ENCODE measurements at regions of chr17 and their contacts with region 1.

Region 1: DNA sequence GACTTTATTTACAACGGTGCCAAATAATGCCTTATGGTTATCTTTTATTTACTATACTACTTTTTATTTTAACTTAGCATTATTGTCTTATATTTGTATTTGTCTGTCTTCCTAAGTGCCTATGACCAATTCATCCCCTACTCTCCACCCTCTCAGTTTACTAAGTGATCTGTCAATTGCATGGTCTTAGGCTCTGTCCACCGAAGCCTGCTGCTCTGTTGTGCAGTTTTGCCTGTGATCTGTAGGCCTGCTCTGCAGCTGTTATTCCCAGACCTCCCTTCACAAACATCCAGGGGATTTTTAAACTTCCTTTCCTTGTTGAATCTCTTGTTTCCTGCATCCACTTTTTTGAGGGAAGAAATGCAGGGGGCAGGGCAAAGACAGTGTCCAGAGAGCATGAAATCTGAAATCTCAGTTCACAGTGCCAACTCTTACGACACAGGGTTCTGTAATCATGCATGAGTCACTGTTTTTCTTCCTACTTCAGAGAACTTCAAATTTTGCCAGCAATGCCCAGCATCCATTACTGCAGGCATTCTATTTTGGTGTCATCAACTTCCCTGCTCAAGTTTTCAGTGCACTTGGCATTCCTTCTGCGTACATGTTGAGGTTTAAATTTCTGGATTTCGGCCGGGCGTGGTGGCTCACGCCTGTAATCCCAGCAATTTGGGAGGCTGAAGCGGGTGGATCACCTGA is 11.4 kb downstream of the SLFN5 start:
- DNase-seq: no peak
- H3K4me3 ChIP-seq: no peak overlapping the region
- H3K4me3 Mint-ChIP-seq: peak overlapping the region in 6 of 8 donors; percentile 9 to 67 (median 34)
- H3K27ac ChIP-seq: no peak overlapping the region
- H3K27ac Mint-ChIP-seq: peak overlapping the region; percentile 43 to 91 (median 87)
- H3K4me1 ChIP-seq: peaks cover 93% of the 10 kb centered on the region
- H3K4me1 Mint-ChIP-seq: peaks cover 60 to 93% (median 76%) of the 10 kb centered on the region in 4 donors
- H3K27me3 ChIP-seq: no peaks in the 10 kb centered on the region
- H3K27me3 Mint-ChIP-seq: no peaks in the 10 kb centered on the region

Region 2: GRCh38 chr17:35183332-35183731 is 70.9 kb before region 1 on chr17:
- CTCF ChIA-PET with region 1: no interaction called
- POLR2A ChIA-PET with region 1: no interaction called
- intact Hi-C with region 1: no loop called
- DNase-seq: no peak
- H3K4me3 ChIP-seq: no peak overlapping the region
- H3K4me3 Mint-ChIP-seq: no peak overlapping the region
- H3K27ac ChIP-seq: no peak overlapping the region
- H3K27ac Mint-ChIP-seq: peak overlapping the region in 2 of 7 donors; percentile 18 to 19
- H3K4me1 ChIP-seq: peaks cover 43% of the 10 kb centered on the region
- H3K4me1 Mint-ChIP-seq: peaks cover 35 to 73% (median 44%) of the 10 kb centered on the region in 4 donors
- H3K27me3 ChIP-seq: no peaks in the 10 kb centered on the region
- H3K27me3 Mint-ChIP-seq: no peaks in the 10 kb centered on the region

Region 3: GRCh38 chr17:35265566-35266141 is 11.4 kb after region 1 on chr17:
- CTCF ChIA-PET with region 1: interaction called, 7 read pairs
- POLR2A ChIA-PET with region 1: interaction called, 16 read pairs
- intact Hi-C with region 1: no loop called
- DNase-seq: no peak
- H3K4me3 ChIP-seq: no peak overlapping the region
- H3K4me3 Mint-ChIP-seq: peak overlapping the region in 7 of 8 donors; percentile 0 to 71 (median 49)
- H3K27ac ChIP-seq: no peak overlapping the region
- H3K27ac Mint-ChIP-seq: peak overlapping the region in 5 of 7 donors; percentile 10 to 83 (median 65)
- H3K4me1 ChIP-seq: peaks cover 48% of the 10 kb centered on the region
- H3K4me1 Mint-ChIP-seq: peaks cover 45 to 64% (median 52%) of the 10 kb centered on the region in 4 donors
- H3K27me3 ChIP-seq: no peaks in the 10 kb centered on the region
- H3K27me3 Mint-ChIP-seq: no peaks in the 10 kb centered on the region

Measured in CD4-positive, alpha-beta memory T cell (primary cell).